ENCODE measurements at regions of chr3 and their contacts with region 1.

Region 1: DNA sequence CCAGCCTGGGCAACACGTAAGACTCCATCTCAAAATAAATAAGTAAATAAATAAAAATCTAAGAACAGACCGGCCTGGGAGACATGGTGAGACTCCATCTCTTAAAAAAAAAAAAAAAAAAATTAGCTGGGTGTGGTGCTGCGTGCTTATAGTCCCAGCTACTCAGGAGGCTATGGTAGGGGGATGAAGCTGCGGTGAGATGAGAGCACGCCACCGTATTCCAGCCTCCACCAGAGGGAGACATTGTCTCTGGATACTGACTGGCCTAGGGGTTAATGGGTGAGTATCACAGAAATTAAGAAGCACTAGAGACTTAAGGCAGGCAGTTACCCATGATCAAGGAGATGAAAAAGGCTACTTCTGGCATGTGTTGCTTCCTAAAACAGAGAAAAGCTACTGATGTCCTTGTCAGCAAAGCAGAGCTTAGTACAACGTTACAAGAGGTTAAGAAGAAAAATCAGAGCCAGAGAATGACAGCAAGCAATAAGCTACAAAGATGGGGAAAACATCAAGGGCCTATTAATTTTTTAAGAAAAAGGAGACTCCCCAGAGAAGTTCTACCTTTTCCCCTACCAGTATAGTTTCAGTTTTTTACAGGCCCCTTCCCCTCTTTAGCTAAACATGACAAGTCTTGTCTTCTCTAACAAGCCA is 8.6 kb downstream of the TFRC start:
- DNase-seq: peak; percentile 89

Region 2: DNA sequence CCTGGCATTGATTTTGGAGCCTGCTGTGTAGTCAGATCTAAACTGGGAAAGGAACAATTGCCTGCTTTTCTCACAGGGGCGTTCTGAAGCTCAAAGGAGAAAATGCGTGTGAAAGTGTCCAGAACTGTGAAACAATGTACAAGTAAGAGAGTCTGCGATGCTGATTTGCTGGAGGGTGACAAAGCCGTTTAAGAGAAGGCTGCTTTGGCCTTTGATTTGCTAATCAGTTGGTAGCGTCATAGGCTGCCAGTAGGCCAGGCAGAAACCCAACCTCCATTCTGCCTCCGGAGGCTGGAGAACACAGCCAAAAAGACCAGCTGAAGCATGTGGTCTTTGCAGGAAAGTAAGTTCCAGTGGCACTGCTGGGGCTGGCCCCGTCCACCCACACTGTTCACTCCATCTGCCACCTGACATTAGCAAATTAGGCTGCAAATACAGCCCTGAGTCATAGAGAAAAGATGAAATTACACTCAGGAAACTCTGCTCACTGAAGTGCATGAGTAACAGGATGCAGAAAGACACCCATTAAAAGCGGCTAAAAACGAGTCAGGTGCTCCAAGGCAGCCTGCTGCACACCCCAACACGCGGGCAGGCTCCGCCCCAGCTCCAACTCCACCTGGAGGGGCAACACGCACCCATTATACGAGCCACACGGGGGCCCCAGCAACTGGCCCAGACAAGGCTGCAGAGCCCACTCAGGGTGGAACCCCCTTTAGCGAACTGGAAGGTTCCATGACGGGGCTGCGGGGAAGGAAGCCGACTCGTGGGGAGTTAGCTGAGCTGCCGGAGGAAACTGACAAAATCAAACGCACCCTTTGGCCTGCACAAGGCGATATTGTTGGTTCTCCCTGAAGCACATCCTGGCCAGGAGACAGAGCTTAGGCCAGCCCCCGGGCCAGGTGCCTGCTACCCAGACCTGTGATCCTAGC is 106.3 kb after region 1 on chr3:
- in situ Hi-C with region 1: loop called (anchors 5 kb)
- DNase-seq: peak; percentile 99